Activated CD4-positive, alpha-beta T cell treated with anti-CD3 and anti-CD28 coated beads for 36 hours (primary cell): ENCODE measurements at regions of chr9 and their contacts with region 1.

Region 1: DNA sequence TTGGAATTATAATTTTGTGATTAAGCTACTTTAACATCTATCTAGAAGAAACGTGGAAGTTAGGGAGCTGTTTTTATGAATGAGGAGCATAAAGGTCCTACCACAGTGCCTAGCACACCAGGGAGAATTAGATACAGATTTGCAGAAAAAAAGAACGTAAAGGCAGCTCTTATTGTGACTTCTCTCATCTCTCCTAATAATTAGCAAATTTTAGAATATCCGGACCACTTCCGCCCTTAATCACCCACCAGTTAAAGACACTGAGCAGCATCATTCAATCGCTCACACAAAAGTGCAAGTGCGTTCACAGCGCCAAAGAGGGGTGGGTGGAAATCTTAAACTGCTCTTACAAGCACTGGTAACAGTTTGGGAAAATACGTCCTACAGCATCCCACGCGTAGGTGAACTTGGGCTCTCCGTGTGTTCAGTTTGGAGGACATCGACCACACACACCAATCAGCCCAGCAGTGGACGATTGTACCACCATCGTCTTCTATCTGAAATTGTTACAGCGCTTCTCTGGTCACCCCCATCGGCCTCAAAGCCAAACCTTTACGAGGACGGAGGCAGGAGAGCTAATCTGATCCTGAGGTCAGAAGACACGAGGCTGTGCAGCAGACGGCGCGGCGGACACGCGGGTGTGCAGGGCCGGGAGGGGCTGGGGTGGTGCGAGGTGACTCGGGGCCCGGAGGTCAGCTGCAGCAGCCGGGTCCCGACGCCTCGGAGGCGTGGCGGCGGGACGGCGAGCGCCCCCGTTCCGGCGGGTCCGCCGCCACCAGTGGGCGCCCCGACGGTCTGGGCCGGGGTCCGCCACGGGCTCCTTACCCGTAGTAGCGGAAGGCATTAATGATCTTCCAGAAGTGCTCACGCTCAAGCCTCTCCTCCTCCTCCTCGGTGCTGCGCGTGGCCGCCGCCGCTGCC is 646 bp downstream of the CARNMT1 start:
- DNase-seq: peak; percentile 72
- ATAC-seq: peak; percentile 34
- H3K4me3 Mint-ChIP-seq: peak overlapping the region; percentile 98
- H3K27ac Mint-ChIP-seq: peak overlapping the region; percentile 99
- H3K4me1 Mint-ChIP-seq: peaks cover 33% of the 10 kb centered on the region
- H3K27me3 Mint-ChIP-seq: no peaks in the 10 kb centered on the region

Region 2: DNA sequence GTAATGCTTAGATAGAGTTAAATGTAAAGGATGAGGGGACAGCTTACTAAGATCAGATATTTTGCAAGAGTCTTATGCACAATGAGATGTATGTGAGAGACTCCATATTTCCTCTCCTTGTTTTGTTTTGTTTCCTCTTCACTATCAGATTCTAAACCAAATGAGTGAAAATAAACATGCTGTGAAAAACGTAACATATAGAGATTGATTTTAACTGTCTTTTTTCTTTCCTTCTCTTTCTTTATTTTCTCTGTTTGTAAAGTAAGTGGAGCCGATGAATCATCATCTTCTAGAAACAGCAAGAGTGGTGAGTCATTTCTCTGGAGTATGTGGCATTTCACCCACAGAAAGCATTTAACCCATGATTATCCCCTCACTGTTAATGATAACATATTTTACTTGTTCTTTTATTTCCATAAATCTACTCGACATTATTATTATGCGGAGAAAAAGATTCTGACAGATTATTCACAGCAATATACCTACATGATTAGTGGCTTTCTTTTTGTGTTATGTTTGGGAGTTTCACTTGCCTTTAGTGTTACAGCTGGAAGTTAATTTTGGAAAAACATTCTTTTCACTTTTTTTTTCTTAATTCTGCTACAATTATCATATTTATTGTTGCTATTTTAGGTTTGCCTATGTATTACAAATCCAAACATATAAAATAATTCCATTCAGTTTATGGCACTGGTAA is 1877.9 kb before region 1 on chr9:
- CTCF ChIA-PET with region 1: no interaction called
- POLR2A ChIA-PET with region 1: no interaction called
- intact Hi-C with region 1: loop called in 1 of 2 experiments (anchors 10 kb)
- DNase-seq: no peak
- ATAC-seq: peak; percentile 65
- H3K4me3 Mint-ChIP-seq: peak overlapping the region; percentile 64
- H3K27ac Mint-ChIP-seq: peak overlapping the region; percentile 81
- H3K4me1 Mint-ChIP-seq: peaks cover 61% of the 10 kb centered on the region
- H3K27me3 Mint-ChIP-seq: no peaks in the 10 kb centered on the region

Region 3: DNA sequence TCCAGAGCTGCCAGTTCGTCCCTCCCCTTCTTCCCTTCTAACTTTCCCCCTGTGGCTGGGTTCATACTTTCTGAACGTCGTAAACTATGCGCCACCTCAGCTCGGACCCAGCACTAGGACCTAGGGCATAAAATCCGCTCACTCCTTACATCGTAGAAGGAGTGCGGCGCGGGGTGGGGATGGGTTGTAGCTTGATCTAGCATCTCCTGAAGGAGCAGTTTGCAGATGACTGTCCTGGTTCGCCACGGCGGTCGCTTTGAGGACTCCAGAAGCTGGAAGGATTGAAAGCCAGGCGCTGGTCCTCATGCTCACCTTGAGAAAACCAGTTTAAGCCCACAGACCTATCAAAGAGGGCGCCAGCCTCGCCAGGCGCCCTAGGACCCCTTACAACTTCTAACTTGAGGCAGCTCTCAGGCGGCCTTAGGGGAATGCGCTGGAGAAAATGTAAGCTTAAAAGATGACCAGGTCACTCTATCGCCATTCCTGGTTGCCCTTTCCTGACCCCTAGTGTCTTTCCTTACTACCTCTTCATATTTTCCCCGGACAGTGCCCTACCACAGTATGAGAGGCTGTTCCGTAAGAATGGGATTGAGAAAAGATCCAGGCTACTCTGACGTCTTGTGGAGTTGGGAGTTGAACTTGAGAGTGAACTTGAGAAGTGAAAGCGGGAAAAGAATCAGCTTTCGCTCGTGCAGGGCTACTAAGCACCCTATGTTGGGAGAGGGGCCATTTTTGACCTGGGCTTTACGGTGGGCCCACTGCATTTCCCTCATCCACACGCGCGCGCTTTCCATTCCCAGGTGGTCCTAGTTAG is 527.5 kb before region 1 on chr9:
- CTCF ChIA-PET with region 1: no interaction called
- POLR2A ChIA-PET with region 1: no interaction called
- intact Hi-C with region 1: no loop called
- DNase-seq: peak; percentile 5
- ATAC-seq: no peak
- H3K4me3 Mint-ChIP-seq: no peak overlapping the region
- H3K27ac Mint-ChIP-seq: no peak overlapping the region
- H3K4me1 Mint-ChIP-seq: peaks cover 20% of the 10 kb centered on the region
- H3K27me3 Mint-ChIP-seq: peaks cover 47% of the 10 kb centered on the region

Region 4: GRCh38 chr9:74803376-74804017 is 223.9 kb before region 1 on chr9:
- CTCF ChIA-PET with region 1: no interaction called
- POLR2A ChIA-PET with region 1: no interaction called
- intact Hi-C with region 1: no loop called
- DNase-seq: no peak
- ATAC-seq: no peak
- H3K4me3 Mint-ChIP-seq: no peak overlapping the region
- H3K27ac Mint-ChIP-seq: no peak overlapping the region
- H3K4me1 Mint-ChIP-seq: no peaks in the 10 kb centered on the region
- H3K27me3 Mint-ChIP-seq: peaks cover 15% of the 10 kb centered on the region

Region 5: DNA sequence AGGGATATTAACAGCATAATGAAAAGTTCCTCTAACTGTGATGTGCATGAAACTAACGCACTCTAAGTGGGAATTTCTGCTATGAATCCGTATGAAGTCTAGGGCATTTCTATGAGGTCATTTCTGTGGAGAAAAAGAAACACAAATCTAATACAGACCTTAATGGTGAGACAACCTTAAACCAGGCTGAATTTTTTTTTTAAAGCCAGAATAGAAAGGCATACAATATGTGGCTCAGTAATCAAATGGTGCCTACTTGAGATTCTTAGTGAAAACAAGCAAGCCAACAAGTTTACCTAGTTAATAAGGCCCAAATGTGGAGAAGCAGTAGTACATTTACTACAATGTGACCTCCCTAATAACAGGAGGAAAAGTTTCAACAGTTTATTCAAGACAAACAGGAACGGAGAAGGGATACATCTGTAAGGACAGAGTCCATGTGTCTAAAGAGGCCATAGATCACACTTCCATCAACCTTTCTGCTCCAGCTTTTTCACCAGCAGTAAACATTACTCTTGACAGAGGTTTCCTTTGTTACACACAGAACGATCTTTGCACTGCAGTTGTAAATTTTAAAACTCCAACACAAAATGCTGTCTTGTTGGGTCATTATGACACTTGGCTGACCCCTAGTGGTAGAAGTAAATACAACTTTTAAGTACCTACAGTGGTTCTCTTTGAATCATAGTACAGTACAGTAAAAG is 25.6 kb before region 1 on chr9:
- CTCF ChIA-PET with region 1: interaction called, 10 read pairs
- POLR2A ChIA-PET with region 1: no interaction called
- intact Hi-C with region 1: no loop called
- DNase-seq: no peak
- ATAC-seq: peak; percentile 92
- H3K4me3 Mint-ChIP-seq: no peak overlapping the region
- H3K27ac Mint-ChIP-seq: no peak overlapping the region
- H3K4me1 Mint-ChIP-seq: peaks cover 2% of the 10 kb centered on the region
- H3K27me3 Mint-ChIP-seq: no peaks in the 10 kb centered on the region

Region 6: GRCh38 chr9:75148561-75148960 is 121.1 kb after region 1 on chr9:
- CTCF ChIA-PET with region 1: no interaction called
- POLR2A ChIA-PET with region 1: interaction called, 3 read pairs
- intact Hi-C with region 1: loop called in 1 of 2 experiments (anchors 1 kb)
- DNase-seq: peak; percentile 28
- ATAC-seq: peak; percentile 58
- H3K4me3 Mint-ChIP-seq: no peak overlapping the region
- H3K27ac Mint-ChIP-seq: peak overlapping the region; percentile 89
- H3K4me1 Mint-ChIP-seq: peaks cover 71% of the 10 kb centered on the region
- H3K27me3 Mint-ChIP-seq: no peaks in the 10 kb centered on the region

Region 7: DNA sequence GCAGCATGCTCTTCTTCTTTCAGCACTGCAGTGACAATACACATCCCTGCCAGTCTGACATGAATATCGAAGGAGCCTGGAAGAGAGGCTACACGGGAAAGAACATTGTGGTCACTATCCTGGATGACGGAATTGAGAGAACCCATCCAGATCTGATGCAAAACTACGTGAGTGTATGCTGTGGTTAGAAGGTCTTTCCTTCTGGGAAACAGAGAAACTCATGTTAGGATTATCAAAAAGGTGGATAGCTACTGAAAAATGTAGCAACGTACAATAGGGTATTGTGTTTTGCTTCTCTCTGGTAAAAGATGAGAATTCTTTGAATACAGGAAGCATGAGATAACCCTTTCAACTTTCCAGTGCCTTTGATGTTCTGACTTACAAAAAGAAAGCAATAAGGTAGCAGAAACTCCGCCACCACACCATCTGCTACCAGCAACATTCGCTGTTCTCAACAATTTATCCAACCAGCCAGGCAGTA is 996.3 kb after region 1 on chr9:
- CTCF ChIA-PET with region 1: no interaction called
- POLR2A ChIA-PET with region 1: no interaction called
- intact Hi-C with region 1: loop called in 1 of 2 experiments (anchors 10 kb)
- DNase-seq: peak; percentile 63
- ATAC-seq: peak; percentile 83
- H3K4me3 Mint-ChIP-seq: peak overlapping the region; percentile 56
- H3K27ac Mint-ChIP-seq: peak overlapping the region; percentile 88
- H3K4me1 Mint-ChIP-seq: peaks cover 89% of the 10 kb centered on the region
- H3K27me3 Mint-ChIP-seq: no peaks in the 10 kb centered on the region